ENCODE measurements at regions of chr20 and their contacts with region 1.

Region 1: GRCh38 chr20:45946149-45946970 is 11.9 kb downstream of the PCIF1 start:
- DNase-seq: peak in 1 of 5 donors; percentile 73
- H3K4me3 ChIP-seq: no peak overlapping the region
- H3K27ac ChIP-seq: peak overlapping the region; percentile 13 to 49
- H3K4me1 ChIP-seq: no peaks in the 10 kb centered on the region
- H3K27me3 ChIP-seq: no peaks in the 10 kb centered on the region
- CTCF ChIP-seq: no peak

Region 2: DNA sequence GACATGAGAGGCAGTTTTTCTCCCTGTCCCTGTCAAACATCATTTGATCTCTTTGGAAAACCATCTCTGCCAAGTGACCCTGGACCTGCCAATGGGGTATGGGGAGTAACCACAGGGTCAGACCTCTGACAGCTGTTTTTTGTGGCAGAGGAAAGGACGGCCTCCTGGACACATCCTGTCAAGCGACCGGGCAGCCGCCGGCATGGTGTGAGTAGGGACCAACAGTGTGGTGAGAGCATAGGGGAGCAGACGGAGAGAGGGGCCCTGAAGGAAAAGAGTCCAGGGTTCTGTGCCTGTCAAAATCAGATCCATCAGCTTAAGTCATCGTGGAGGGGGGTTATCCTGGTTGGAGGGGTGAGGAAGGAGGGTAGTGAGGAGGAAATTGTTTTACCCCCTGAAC is 144.5 kb before region 1 on chr20:
- intact Hi-C with region 1: loop called (anchors 10 kb)
- DNase-seq: no peak
- H3K4me3 ChIP-seq: no peak overlapping the region
- H3K27ac ChIP-seq: no peak overlapping the region
- H3K4me1 ChIP-seq: no peaks in the 10 kb centered on the region
- H3K27me3 ChIP-seq: no peaks in the 10 kb centered on the region
- CTCF ChIP-seq: no peak

Measured in kidney (tissue), 22 donors.